AG04450 (cell line): ENCODE measurements at regions of chr6 and their contacts with region 1.

Region 1: DNA sequence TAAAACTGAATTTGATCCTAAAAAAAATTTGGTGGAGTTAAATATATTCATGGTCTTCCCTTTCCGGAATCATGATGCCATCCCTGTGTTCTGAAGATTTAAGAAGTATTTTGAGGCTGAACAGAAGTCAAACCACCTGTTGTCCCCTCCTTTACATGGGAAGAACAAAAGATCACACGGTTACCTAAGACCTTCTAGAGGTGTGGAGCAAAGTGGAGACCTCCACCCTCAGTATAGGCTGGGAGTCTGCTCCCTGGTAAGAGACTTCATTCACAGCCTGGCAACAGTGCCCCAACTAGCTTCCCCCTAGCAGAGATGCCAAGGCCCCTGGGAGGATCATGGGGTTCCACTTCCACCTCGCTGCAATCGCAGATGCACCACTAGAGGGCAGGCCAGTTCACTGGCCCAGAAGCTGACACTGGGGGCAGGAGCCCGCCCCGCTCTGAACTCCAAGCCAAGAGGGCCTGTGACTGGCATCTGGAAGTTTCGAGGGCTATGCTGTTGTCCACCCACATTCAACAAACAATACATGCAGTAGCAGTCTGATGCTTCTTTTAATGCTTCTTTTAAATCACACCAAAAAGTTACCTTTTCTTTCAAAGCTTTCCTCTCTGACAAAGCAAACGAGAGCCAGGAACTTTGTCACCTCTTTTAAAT is 19.5 kb upstream of the UBE2J1 start:
- DNase-seq: peak; percentile 6
- H3K4me3 ChIP-seq: no peak overlapping the region
- H3K27ac ChIP-seq: no peak overlapping the region
- H3K27me3 ChIP-seq: peaks cover 10% of the 10 kb centered on the region
- CTCF ChIP-seq: peak; percentile 93

Region 2: DNA sequence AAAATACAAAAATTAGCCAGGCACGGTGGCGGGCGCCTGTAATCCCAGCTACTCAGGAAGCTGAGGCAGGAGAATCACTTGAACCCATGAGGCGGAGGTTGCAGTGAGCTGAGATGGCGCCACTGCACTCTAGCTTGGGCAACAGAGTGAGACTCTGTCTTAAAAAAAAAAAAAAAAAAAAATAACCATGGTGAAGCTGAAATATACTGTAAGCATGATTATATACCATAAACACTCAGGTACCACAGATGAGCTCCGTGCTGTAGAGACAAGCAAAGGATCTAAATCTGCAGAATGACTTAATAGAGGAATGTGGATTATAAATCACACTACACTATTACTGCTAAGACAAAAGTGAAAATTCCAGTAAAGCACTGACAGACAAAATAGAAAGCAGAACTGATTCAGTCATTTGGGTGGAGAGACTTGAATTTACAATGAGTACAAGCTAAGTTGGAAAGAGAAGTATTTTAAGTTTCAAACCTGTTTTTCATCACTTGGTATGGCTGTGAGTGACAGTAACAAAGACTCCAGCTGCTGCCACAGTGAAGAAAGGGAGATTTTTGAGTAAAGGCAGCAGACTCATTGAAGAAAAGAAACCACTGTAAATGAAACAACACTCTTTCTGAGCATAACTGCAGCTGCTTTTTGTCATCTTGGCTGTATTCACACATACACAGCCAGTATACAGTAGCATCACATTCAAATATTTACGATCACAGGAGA is 730.6 kb before region 1 on chr6:
- CTCF ChIA-PET with region 1: no interaction called
- POLR2A ChIA-PET with region 1: no interaction called
- DNase-seq: no peak
- H3K4me3 ChIP-seq: no peak overlapping the region
- H3K27ac ChIP-seq: no peak overlapping the region
- H3K27me3 ChIP-seq: no peaks in the 10 kb centered on the region
- CTCF ChIP-seq: no peak

Region 3: DNA sequence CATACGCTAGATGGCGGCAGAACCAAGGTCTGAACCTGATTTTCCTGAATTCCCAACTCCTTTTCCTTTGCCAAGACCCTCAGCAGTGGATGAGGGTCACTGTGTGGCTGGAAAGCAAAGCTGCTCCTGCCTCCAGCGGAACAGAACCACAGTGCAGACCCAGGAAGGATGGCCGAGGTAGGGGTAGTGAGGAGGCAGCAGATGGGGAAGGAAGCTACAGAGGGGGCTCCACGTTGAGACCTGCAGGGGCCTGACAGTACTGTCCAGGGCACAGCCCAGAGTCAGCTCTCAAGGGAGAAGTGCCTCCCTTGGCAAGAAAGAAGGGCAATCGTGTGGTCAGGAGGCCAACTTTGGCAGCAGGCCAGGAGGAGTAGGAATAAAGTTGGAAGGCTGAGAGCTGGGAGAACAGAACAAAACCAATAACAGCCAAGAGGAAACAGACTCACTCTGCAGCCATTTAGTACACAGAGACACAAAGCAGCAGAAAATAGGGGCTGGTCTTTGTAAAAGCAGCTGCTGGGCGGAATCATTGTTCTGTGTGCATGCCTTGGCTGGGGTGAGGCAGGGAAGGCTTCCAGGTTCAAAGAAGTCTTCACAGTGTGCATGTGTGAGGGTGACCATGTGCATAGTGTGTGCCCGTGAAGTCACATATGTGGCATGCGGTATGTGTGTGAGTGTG is 60.0 kb before region 1 on chr6:
- CTCF ChIA-PET with region 1: interaction called, 22 read pairs
- POLR2A ChIA-PET with region 1: no interaction called
- DNase-seq: no peak
- H3K4me3 ChIP-seq: no peak overlapping the region
- H3K27ac ChIP-seq: no peak overlapping the region
- H3K27me3 ChIP-seq: peaks cover 14% of the 10 kb centered on the region
- CTCF ChIP-seq: peak; percentile 75

Region 4: DNA sequence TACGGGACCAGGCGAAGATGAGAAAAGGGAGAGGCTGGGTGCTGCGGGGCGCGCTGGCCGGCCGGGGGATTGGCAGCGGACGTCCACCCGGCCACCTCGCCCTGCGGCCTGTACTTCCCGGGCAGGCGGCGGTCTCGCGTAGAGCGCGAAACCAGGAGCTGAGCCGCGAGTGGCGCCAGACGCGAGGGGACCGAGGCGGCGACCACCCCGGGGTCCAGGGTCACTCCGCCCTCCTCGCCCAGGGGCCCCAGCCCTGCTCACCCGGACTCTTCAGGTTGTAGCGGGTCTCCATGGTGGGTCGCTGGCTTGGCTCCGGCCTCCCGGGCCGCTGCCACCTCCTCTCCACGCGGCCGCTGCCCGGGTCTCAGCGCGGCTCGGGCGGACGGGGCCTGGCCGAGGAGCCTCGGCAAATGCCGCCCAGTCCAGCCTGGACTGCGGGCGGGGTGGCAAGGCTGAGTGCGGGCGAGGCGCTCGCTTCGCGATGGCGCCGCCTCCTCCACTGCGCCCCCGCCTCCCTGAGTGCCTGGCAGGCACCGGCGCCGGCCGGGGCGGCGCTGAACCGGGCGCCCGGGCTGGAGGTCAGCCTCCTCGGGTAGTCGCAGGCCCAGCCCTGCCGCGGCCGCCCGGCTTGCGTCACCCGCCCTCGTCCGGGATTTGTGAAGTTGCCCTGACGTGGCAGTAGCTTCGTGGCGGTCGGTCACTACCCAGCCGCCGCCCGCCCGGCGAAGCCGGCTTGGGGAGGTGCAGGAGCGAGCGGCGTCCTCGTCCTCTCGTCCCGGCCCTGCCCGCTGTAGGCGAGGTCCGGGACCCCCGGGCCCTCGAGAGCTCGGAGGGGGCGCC is 19.5 kb before region 1 on chr6 and contains the start of gene UBE2J1:
- CTCF ChIA-PET with region 1: interaction called, 53 read pairs
- POLR2A ChIA-PET with region 1: interaction called, 4 read pairs
- DNase-seq: peak; percentile 77
- H3K4me3 ChIP-seq: peak within 1 kb of the TSS; percentile 95
- H3K27ac ChIP-seq: peak within 1 kb of the TSS; percentile 89
- H3K27me3 ChIP-seq: no peaks in the 10 kb centered on the region
- CTCF ChIP-seq: no peak
- polyA plus RNA-seq, gene UBE2J1: 38.8 and 49.4 TPM in 2 replicates

Region 5: DNA sequence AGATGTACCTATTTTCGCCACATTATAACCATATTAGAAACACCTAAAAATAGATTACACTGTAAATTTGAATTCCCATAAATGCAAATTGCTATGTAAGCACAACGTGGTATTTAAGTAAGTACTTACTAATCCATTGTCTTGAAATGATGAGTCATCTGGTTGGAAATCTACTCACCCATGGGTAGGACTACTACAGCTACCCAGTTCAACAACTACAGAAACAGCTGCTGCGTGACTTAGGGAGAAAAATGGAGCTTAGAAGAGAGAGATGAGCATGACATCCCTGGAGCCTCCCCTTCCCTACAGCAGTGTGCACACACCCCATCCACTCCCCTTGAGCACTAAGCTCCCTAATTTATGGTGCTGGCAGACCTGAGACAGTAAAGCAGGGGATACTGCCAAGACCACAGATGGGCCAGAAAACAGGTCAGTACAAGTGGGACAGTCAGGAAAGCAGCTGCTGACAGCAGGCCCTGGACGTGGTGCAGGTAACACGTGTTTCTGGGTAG is 13.2 kb after region 1 on chr6:
- CTCF ChIA-PET with region 1: interaction called, 12 read pairs
- POLR2A ChIA-PET with region 1: no interaction called
- DNase-seq: no peak
- H3K4me3 ChIP-seq: no peak overlapping the region
- H3K27ac ChIP-seq: no peak overlapping the region
- H3K27me3 ChIP-seq: peaks cover 3% of the 10 kb centered on the region
- CTCF ChIP-seq: no peak